Activated naive CD4-positive, alpha-beta T cell treated with anti-CD3 and anti-CD28 coated beads, Interleukin-2, amount 10 ng/mL, durations not matched to agents 7 days and 5 days (primary cell): ENCODE measurements at regions of chr19 and their contacts with region 1.

Region 1: GRCh38 chr19:8580710-8581281 is 3.6 kb upstream of the MYO1F start:
- DNase-seq: peak; percentile 89
- H3K4me3 Mint-ChIP-seq: no peak overlapping the region
- H3K27ac Mint-ChIP-seq: no peak overlapping the region
- H3K4me1 Mint-ChIP-seq: peaks cover 45% of the 10 kb centered on the region
- H3K27me3 Mint-ChIP-seq: peaks cover 7% of the 10 kb centered on the region

Region 2: DNA sequence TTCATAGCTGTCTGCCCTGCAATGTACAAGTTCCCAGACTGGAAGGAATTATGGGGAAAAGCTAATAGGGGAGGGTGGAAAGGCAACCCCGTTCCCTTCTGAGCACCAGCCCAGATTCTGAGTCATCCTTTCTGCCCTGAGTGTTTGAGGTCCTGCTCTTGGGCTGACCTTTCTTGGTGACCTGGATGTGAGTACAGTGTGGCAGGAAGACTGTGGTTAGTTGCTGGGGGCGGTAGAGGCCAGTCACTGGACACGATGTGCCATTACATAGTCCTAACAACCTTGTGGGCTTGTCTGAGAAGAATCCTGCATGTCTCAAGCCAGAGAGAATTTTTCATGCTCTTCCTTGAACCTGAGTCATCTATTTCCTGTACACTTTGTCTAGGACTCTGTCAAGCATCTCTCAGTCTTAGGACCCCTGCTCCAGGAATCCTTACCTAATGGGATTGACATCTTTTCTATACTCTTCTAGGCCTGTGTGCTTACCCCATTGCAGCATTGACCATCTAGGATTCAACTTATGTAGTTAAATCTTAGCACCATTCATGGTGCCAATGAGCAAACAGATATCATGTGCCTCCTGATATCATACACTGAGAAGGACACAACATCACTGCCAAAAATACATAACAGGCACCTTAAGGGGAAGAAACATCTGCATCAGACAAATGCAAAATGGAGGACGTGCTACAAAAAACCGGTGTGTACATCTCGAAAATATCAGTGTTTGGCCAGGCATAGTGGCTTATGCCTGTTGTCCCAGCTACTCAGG is 225.0 kb before region 1 on chr19:
- CTCF ChIA-PET with region 1: interaction called, 49 read pairs
- DNase-seq: no peak
- H3K4me3 Mint-ChIP-seq: no peak overlapping the region
- H3K27ac Mint-ChIP-seq: no peak overlapping the region
- H3K4me1 Mint-ChIP-seq: peaks cover 3% of the 10 kb centered on the region
- H3K27me3 Mint-ChIP-seq: peaks cover 53% of the 10 kb centered on the region

Region 3: DNA sequence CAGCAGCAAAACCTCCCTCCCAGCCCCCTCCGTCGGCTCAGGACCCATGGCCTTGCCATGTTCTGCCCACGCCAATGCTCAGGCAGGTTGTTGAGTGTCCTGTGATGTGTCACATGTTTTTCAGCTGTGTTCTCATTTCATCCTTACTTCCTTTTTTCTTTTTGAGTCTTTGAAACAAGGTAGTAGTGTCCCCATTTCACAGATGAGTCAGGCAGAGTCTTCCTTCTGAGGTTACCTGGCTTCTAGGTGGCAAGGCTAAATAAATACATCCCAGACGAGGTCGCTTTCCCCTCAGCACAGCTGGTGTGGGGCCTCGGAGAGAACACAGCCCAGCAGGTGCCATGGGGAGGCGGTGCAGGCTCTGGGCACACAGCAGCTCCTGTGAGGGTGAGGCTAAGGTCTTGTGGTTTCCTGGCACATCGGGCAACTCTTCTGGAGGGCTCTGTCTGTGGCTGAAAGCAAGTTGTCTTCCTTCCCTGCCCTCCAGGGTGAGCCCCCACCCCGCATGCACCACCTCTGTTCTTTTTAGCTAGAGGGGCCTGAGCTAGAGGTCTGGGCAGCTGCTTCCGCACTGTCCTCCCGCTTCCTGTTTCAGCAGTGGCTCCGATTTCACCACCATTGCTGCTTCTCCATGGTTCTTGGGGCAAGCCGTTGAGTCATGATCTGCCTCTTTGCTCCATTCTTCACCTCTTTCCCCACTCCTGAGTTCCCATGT is 93.5 kb before region 1 on chr19:
- CTCF ChIA-PET with region 1: interaction called, 50 read pairs
- DNase-seq: peak; percentile 77
- H3K4me3 Mint-ChIP-seq: no peak overlapping the region
- H3K27ac Mint-ChIP-seq: peak overlapping the region; percentile 85
- H3K4me1 Mint-ChIP-seq: peaks cover 45% of the 10 kb centered on the region
- H3K27me3 Mint-ChIP-seq: no peaks in the 10 kb centered on the region

Region 4: DNA sequence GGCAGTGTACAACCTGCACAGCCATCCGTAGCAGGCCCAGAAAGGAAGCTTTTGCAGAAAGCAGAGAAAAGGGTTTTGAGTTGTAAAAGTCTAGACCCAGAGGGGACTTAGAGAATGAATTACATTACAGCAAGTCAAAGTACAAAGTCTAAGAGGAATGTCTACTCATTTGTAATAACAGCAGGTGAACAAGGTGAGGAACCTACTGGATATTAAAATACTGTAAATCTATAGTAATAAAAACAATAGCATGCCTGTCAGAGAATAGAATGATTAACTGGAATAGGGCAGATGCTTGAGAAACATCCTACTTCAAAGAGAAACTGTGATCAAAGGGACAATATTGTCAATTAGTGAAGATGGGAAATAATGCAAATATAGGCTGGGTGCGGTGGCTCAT is 48.6 kb before region 1 on chr19:
- CTCF ChIA-PET with region 1: interaction called, 11 read pairs
- DNase-seq: no peak
- H3K4me3 Mint-ChIP-seq: no peak overlapping the region
- H3K27ac Mint-ChIP-seq: no peak overlapping the region
- H3K4me1 Mint-ChIP-seq: no peaks in the 10 kb centered on the region
- H3K27me3 Mint-ChIP-seq: no peaks in the 10 kb centered on the region

Region 5: DNA sequence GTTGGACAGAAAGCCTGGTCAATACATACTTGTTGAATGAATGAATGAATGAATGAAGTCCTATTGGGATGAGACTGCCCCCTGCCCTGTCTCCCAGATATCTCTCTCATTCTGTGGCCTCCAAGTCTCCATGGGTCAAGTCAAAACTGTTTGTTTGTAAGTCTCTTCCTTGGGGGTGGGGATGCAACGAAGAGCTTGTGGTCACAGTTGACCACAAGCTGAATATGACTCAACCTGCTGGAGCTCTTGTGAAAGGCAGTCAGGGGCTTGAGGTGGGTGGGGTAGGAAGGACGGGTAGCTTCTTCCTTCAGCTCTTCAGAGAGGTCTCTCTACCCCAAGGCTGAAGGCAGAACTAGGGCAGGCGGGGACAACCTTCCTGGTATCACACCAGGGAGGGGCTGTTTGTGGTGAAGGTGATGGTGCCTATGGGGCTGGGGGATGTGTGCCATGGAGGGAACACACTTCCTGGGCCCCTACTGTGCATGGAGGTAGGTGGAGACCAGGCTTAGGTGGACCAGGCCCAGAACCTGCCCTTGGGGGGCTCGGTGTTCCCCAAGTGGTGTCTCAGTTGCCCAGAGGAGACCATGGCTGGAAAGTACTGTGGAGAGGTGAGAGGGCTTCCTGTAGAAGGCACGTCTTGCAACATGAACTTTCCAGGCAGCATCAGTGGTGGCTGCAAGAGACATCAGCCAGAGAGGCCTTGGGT is 11.6 kb before region 1 on chr19:
- CTCF ChIA-PET with region 1: interaction called, 57 read pairs
- DNase-seq: peak; percentile 86
- H3K4me3 Mint-ChIP-seq: peak overlapping the region; percentile 68
- H3K27ac Mint-ChIP-seq: peak overlapping the region; percentile 98
- H3K4me1 Mint-ChIP-seq: peaks cover 89% of the 10 kb centered on the region
- H3K27me3 Mint-ChIP-seq: no peaks in the 10 kb centered on the region